ENCODE measurements at regions of chr7 and their contacts with region 1.

Region 1: GRCh38 chr7:151351027-151351426 is 9.4 kb downstream of the NUB1 start:
- DNase-seq: peak in 1 of 2 donors; percentile 41
- ATAC-seq: no peak

Region 2: GRCh38 chr7:151198945-151199848 is 151.8 kb before region 1 on chr7:
- intact Hi-C with region 1: no loop called
- DNase-seq: no peak
- ATAC-seq: no peak

Region 3: DNA sequence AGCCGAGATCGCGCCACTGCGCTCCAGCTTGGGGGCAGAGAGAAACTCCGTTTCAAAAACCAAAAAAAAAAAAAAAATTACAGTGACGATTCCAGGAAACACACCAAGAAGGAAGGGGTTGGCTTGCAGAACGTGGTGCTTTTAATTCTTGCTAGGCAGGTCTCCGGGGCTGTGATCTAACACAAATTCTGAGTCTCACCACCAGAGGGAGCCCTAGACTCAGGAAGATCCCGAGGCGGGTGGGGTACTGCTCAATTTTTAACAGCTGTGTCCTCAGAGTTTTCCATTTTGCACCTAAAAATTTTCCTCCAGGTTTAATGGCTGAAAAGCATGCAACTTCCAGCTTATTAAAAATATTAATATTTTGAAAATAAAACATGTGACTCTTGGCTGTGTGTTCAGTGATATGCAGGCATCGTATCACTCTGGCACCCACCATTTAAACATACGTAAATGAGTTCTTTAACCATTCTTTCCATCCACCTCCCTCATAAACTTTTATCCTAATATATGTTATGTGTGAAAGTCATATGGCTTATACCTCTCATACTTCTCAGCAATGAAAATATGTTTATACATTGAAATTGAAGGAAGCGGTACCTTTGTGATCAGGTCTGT is 35.9 kb before region 1 on chr7:
- intact Hi-C with region 1: loop called in 1 of 2 experiments (anchors 2 kb)
- DNase-seq: peak; percentile 45 to 70
- ATAC-seq: peak; percentile 67

Measured in left colon (tissue), 2 donors.